ENCODE measurements at regions of chr2 and their contacts with region 1.

Region 1: DNA sequence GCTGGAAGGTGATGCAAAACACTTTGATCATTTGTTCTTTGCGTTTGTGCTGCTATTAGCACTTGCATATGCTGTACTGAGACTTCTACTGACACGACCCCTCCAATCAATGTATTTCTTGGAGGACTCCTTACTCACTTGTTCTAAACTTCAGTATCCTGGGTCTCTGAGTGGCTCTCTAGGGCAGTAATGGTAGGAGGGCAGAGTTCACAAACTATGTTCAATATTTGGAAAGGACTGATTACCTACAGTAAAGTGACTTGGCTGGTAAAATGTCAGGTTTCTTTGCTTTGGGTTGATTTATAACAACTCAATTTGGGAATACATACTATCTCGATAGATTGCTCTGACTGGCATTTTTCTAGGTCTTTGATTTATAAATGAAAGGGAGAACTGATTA is 93.7 kb downstream of the TRIM43 start:
- DNase-seq: no peak
- ATAC-seq: no peak
- H3K4me3 ChIP-seq: no peak overlapping the region
- H3K27ac ChIP-seq: no peak overlapping the region
- H3K4me1 ChIP-seq: peaks cover 15% of the 10 kb centered on the region
- H3K27me3 ChIP-seq: no peaks in the 10 kb centered on the region
- CTCF ChIP-seq: no peak
- POLR2A ChIP-seq: no peak
- RAD21 ChIP-seq: no peak

Region 2: DNA sequence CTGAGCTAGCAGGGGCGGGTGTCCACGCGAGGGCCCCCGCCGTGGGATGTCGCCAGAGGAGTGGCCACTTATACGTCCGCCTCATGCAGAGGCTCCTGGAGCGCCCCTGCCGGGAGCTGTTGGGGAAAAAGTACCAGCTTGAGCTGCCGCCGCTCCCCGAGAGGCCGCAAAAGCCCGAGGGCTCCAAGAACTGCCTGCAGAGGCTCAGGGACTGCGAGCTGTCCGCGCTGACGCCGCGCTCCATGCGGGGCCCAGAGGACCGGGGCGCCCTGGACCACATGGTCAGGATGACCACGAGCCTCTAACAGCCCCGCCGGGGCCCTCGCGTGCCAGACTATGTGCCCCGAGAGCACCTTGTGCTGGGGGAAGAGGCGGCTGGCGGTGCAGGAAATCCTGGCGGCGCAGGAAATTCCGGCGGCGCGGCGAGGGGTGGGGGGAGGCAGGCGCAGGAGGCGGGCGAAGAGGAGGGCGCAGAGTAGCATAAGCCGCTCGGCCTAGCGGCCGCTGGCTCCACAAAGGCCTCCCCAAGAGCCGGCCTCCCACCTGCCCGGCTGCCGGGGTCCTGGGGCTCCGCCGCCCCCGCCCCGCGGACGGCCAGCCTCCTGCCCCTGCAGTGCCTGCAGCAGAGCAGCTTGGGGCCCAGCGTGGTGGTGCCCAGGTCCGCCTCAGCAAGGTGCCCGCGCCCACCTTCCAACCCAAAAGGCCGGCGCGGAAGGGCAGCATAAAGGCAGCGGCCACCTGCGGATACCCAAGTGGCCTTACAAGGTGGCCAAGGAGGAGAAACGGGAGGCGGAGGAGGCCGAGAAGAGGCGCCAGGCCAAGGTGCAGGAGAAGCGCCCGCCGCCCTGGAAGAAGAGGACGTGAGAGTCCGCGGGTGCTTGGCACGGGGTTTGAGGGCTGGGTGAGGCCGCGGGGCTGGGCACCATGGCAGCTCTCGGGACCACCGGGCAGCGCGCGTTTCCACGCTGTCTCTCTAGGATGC is 158.9 kb before region 1 on chr2:
- CTCF ChIA-PET with region 1: no interaction called
- POLR2A ChIA-PET with region 1: no interaction called
- dilution Hi-C with region 1: no loop called
- in situ Hi-C with region 1: no loop called
- intact Hi-C with region 1: loop called (anchors 5 kb)
- DNase-seq: peak; percentile 67
- ATAC-seq: peak; percentile 96
- H3K4me3 ChIP-seq: peak overlapping the region; percentile 65
- H3K27ac ChIP-seq: peak overlapping the region; percentile 88
- H3K4me1 ChIP-seq: peaks cover 9% of the 10 kb centered on the region
- H3K27me3 ChIP-seq: no peaks in the 10 kb centered on the region
- CTCF ChIP-seq: peak; percentile 39
- POLR2A ChIP-seq: no peak
- RAD21 ChIP-seq: no peak

Measured in IMR-90 (cell line).